Psoas muscle (tissue), 8 donors: ENCODE measurements at regions of chr13 and their contacts with region 1.

Region 1: DNA sequence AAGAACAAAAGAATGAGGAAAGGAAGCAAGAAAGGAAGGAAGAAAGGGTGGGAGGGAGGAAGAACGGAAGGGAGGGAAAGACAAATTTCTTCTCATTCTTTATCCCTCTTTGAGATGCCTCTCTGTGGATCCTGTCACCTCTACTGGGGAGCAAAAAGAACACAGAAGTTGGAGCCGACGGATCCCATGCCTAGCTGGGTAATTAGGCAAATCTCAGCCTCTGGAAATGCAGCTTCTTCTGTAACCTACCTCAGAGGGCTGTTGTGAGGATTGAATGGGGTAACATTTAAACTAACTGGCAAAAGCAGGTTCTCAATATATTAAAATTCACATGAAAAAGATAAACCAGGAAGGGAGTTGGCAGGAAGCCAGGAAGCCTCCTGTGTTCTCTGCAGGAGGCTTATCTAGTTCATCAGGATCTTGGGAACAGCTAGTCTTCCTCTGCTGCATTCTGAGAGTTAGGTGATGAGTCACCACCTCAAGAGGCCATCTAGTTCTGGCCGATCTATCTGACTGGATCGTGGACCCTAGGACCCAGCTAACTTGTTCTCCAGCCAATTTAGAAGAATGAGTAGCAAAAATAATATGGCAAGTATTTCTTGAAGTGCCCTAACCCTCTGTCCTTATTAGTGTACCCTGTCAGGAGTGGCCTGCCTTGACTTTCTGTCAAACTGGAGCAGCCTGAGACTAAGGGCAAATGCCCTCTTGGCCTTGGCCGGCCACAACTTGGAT is 15.2 kb upstream of the CPB2 start:
- DNase-seq: no peak
- ATAC-seq: no peak
- H3K4me3 ChIP-seq: no peak overlapping the region
- H3K27ac ChIP-seq: no peak overlapping the region
- H3K4me1 ChIP-seq: no peaks in the 10 kb centered on the region
- H3K27me3 ChIP-seq: no peaks in the 10 kb centered on the region
- CTCF ChIP-seq: no peak

Region 2: GRCh38 chr13:46052319-46053161 is 67.5 kb before region 1 on chr13 and contains the start of gene ZC3H13:
- intact Hi-C with region 1: loop called in 1 of 2 experiments (anchors 5 kb)
- DNase-seq: peak; percentile 90 to 95
- ATAC-seq: peak; percentile 100
- H3K4me3 ChIP-seq: peak within 1 kb of the TSS; percentile 86
- H3K27ac ChIP-seq: peak within 1 kb of the TSS; percentile 93
- H3K4me1 ChIP-seq: peaks cover 30% of the 10 kb centered on the region
- H3K27me3 ChIP-seq: no peaks in the 10 kb centered on the region
- CTCF ChIP-seq: peak; percentile 32
- total RNA-seq, gene ZC3H13: 25.4 to 31.6 (median 26.9) TPM